ENCODE measurements at regions of chr20 and their contacts with region 1.

Region 1: DNA sequence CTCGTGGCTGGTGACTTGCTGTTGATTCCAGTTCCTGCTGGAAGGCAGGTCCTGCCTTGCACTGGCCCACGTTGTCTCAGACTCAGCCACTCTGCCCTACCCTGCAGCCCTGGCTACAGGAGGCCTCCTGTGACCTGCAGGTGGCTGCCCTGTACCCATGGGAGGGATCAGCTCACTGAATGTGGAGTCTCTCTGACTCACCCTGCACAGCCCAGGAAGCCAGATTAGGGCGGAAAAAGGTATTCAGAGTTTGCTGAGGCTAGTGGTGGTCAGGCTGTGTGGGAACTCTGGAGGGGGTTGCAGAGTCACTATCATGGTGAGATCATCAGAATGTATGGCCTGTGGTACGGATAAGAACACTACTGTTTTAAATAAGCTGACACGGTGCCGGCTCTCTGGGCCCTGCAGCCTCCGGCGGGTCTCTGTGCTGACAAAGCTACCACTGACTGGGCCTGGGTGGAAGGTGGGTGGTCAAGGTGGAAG is 24.7 kb upstream of the PYGB start:
- DNase-seq: peak; percentile 99
- H3K4me3 ChIP-seq: no peak overlapping the region
- H3K27ac ChIP-seq: peak overlapping the region; percentile 79
- H3K4me1 ChIP-seq: peaks cover 53% of the 10 kb centered on the region
- H3K27me3 ChIP-seq: no peaks in the 10 kb centered on the region
- CTCF ChIP-seq: peak in 1 of 2 donors; percentile 65

Region 2: GRCh38 chr20:25100914-25101313 is 122.3 kb before region 1 on chr20:
- CTCF ChIA-PET with region 1: no interaction called
- dilution Hi-C with region 1: no loop called
- in situ Hi-C with region 1: no loop called
- intact Hi-C with region 1: no loop called
- DNase-seq: no peak
- H3K4me3 ChIP-seq: no peak overlapping the region
- H3K27ac ChIP-seq: no peak overlapping the region
- H3K4me1 ChIP-seq: no peaks in the 10 kb centered on the region
- H3K27me3 ChIP-seq: peaks cover 2% of the 10 kb centered on the region
- CTCF ChIP-seq: no peak

Region 3: DNA sequence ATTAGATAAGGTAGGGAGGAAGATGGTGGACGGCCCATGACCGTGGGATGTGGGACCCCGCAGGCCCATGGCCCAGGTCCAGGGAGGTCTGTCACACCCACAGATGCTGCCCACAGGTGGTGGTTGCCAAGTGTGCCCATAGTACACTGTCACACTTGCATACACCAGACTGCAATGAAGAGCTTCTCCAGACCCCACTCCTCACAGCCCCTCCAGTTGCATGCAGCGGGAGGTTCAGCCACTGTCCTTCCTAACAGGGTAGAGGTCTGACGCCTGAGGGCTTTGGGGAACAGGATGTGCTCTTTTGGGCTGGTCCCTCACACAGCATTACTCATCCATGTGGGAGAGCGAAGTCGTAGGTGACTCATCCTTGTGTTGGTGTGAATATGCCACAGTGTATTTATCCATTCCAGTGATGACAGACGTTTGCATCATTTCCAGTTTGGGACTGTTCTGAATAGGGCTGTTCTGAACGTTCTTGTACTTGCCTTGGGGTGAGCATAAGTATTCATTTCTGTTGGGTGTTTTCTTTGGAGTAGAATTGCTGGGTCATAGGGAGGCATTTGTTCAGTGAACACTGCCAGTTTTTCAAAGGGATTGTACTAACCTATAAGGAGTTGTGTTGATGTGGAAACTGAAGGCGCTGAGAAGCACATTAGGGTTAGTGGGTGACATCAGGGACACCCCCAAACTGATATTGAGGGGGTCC is 14.5 kb after region 1 on chr20:
- CTCF ChIA-PET with region 1: no interaction called
- dilution Hi-C with region 1: no loop called
- in situ Hi-C with region 1: no loop called
- intact Hi-C with region 1: loop called (anchors 1 kb)
- DNase-seq: peak; percentile 100
- H3K4me3 ChIP-seq: no peak overlapping the region
- H3K27ac ChIP-seq: peak overlapping the region; percentile 98
- H3K4me1 ChIP-seq: peaks cover 84% of the 10 kb centered on the region
- H3K27me3 ChIP-seq: no peaks in the 10 kb centered on the region
- CTCF ChIP-seq: no peak